CD14-positive monocyte (primary cell): ENCODE measurements at regions of chr19 and their contacts with region 1.

Region 1: GRCh38 chr19:49097455-49098288 is 12.4 kb downstream of the SNRNP70 start:
- DNase-seq: peak; percentile 55 to 67 (median 64)
- H3K4me3 ChIP-seq: no peak overlapping the region
- H3K4me3 Mint-ChIP-seq: no peak overlapping the region
- H3K27ac ChIP-seq: peak overlapping the region in 1 of 2 donors; percentile 38
- H3K27ac Mint-ChIP-seq: peak overlapping the region in 1 of 7 donors; percentile 42
- H3K4me1 ChIP-seq: no peaks in the 10 kb centered on the region
- H3K4me1 Mint-ChIP-seq: no peaks in the 10 kb centered on the region
- H3K27me3 ChIP-seq: no peaks in the 10 kb centered on the region
- H3K27me3 Mint-ChIP-seq: peaks cover 0 to 1% (median 0%) of the 10 kb centered on the region in 3 donors
- CTCF ChIP-seq: peak; percentile 99

Region 2: DNA sequence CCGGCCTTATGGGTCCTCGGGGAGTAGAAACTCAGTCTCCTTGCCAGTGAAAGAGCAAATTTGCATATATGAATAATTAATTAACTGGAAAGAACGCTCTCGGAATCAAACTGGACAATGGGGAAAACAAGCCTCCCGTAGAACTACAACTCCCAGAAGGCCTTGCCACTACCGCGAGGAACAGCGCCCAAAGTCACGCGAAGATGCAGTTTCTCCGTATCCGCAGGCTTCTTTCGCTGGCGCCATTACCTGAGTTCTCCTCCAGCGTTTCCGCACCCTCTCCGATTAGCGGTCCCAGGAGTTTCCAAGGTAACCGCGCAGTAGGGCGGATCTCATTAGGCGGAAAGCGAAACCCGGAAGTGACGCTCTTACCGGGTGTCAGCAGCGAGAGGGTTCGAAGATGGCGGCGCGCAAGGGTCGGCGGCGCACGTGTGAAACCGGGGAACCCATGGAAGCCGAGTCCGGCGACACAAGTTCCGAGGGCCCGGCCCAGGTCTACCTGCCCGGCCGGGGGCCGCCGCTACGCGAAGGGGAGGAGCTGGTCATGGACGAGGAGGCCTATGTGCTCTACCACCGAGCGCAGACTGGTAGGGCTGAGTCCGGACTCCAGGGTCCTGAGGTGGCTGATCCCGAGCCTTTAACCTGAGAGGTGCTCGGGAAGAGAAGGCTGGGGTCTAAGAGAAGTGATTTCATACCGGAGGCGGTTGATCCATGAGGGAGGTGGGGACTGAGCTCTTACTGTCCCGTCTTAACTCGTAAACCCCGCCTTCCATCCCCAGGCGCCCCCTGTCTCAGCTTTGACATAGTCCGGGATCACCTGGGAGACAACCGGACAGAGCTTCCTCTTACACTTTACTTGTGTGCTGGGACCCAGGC is 651.8 kb before region 1 on chr19 and contains the start of gene GRWD1:
- intact Hi-C with region 1: no loop called
- DNase-seq: peak; percentile 92 to 96 (median 94)
- H3K4me3 ChIP-seq: peak within 1 kb of the TSS; percentile 77 to 99 (median 95)
- H3K4me3 Mint-ChIP-seq: peak within 1 kb of the TSS; percentile 86 to 92
- H3K27ac ChIP-seq: peak within 1 kb of the TSS; percentile 82 to 91
- H3K27ac Mint-ChIP-seq: peak within 1 kb of the TSS; percentile 95 to 99 (median 98)
- H3K4me1 ChIP-seq: peaks cover 25 to 32% of the 10 kb centered on the region in 2 donors
- H3K4me1 Mint-ChIP-seq: peaks cover 23% of the 10 kb centered on the region
- H3K27me3 ChIP-seq: peaks cover 28 to 31% of the 10 kb centered on the region in 2 donors
- H3K27me3 Mint-ChIP-seq: peaks cover 25 to 36% (median 30%) of the 10 kb centered on the region in 3 donors
- CTCF ChIP-seq: peak; percentile 12
- polyA plus RNA-seq, gene GRWD1: 3.7 to 13.9 (median 10.0) TPM

Region 3: GRCh38 chr19:49085020-49085867 is 12.4 kb before region 1 on chr19 and contains the start of gene SNRNP70:
- intact Hi-C with region 1: no loop called
- DNase-seq: peak; percentile 98 to 99 (median 99)
- H3K4me3 ChIP-seq: peak within 1 kb of the TSS; percentile 62 to 93 (median 71)
- H3K4me3 Mint-ChIP-seq: peak within 1 kb of the TSS; percentile 91 to 94
- H3K27ac ChIP-seq: peak within 1 kb of the TSS; percentile 61 to 84
- H3K27ac Mint-ChIP-seq: peak within 1 kb of the TSS; percentile 86 to 95 (median 89)
- H3K4me1 ChIP-seq: peaks cover 18 to 22% of the 10 kb centered on the region in 2 donors
- H3K4me1 Mint-ChIP-seq: peaks cover 21% of the 10 kb centered on the region
- H3K27me3 ChIP-seq: no peaks in the 10 kb centered on the region
- H3K27me3 Mint-ChIP-seq: peaks cover 2 to 4% (median 2%) of the 10 kb centered on the region in 3 donors
- CTCF ChIP-seq: no peak
- polyA plus RNA-seq, gene SNRNP70: 27.4 to 360 (median 40.4) TPM

Region 4: GRCh38 chr19:49148784-49149651 is 51.3 kb after region 1 on chr19:
- intact Hi-C with region 1: loop called (anchors 2 to 5 kb)
- DNase-seq: peak; percentile 49 to 64 (median 54)
- H3K4me3 ChIP-seq: peak overlapping the region in 2 of 3 experiments; percentile 59 to 79
- H3K4me3 Mint-ChIP-seq: peak overlapping the region; percentile 79 to 93
- H3K27ac ChIP-seq: no peak overlapping the region
- H3K27ac Mint-ChIP-seq: peak overlapping the region in 1 of 7 donors; percentile 63
- H3K4me1 ChIP-seq: peaks cover 39 to 53% of the 10 kb centered on the region in 2 donors
- H3K4me1 Mint-ChIP-seq: peaks cover 45% of the 10 kb centered on the region
- H3K27me3 ChIP-seq: peaks cover 13 to 54% of the 10 kb centered on the region in 2 donors
- H3K27me3 Mint-ChIP-seq: peaks cover 67 to 77% (median 70%) of the 10 kb centered on the region in 3 donors
- CTCF ChIP-seq: no peak

Region 5: DNA sequence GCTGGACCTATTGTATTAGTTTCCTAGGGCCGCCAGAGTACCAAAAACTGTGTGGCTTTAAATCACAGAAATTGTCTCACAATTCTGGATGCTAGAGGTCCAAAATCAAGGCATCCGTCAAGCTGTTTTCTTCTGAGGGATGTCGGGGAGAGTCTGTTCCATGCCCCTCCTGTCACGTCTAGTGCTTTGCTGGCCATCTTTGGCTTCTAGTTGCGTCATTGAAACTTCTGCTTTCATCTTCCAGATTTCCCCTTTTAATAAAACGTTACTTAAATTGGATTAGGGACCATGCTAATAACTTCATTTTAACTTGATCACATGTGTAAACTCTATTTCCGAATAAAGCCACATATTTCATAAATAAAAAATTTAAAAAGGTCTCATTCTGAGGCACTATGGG is 107.4 kb after region 1 on chr19:
- intact Hi-C with region 1: loop called in 1 of 2 experiments (anchors 5 kb)
- DNase-seq: peak; percentile 68 to 82 (median 76)
- H3K4me3 ChIP-seq: no peak overlapping the region
- H3K4me3 Mint-ChIP-seq: peak overlapping the region in 1 of 2 donors; percentile 35
- H3K27ac ChIP-seq: no peak overlapping the region
- H3K27ac Mint-ChIP-seq: peak overlapping the region in 6 of 7 donors; percentile 43 to 89 (median 76)
- H3K4me1 ChIP-seq: peaks cover 32 to 55% of the 10 kb centered on the region in 2 donors
- H3K4me1 Mint-ChIP-seq: peaks cover 42% of the 10 kb centered on the region
- H3K27me3 ChIP-seq: no peaks in the 10 kb centered on the region
- H3K27me3 Mint-ChIP-seq: peaks cover 0 to 6% (median 4%) of the 10 kb centered on the region in 3 donors
- CTCF ChIP-seq: no peak

Region 6: GRCh38 chr19:49216071-49216470 is 118.4 kb after region 1 on chr19:
- intact Hi-C with region 1: loop called in 1 of 2 experiments (anchors 5 kb)
- DNase-seq: no peak
- H3K4me3 ChIP-seq: no peak overlapping the region
- H3K4me3 Mint-ChIP-seq: no peak overlapping the region
- H3K27ac ChIP-seq: no peak overlapping the region
- H3K27ac Mint-ChIP-seq: no peak overlapping the region
- H3K4me1 ChIP-seq: peaks cover 0 to 10% of the 10 kb centered on the region in 2 donors
- H3K4me1 Mint-ChIP-seq: peaks cover 6% of the 10 kb centered on the region
- H3K27me3 ChIP-seq: no peaks in the 10 kb centered on the region
- H3K27me3 Mint-ChIP-seq: peaks cover 2 to 12% (median 6%) of the 10 kb centered on the region in 3 donors
- CTCF ChIP-seq: no peak

Region 7: DNA sequence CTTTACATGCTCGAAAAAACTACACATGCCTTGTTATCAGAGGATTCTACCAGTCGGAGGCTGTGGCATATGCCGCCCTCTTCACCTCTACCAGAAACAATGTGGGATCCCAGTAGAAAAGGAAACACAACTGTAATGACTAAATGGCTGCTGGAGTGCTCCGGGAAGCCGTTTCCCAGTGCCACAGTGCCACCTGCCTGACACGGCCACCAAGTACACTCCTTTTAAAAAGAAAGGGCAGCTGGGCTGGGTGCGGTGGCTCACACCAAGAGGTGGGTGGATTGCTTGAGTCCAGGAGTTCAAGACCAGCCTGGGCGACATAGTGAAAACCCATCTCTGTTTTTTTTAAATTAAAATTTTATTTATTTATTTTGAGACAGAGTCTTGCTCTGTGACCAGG is 127.2 kb after region 1 on chr19:
- intact Hi-C with region 1: loop called in 1 of 2 experiments (anchors 5 kb)
- DNase-seq: peak; percentile 21 to 30 (median 27)
- H3K4me3 ChIP-seq: no peak overlapping the region
- H3K4me3 Mint-ChIP-seq: no peak overlapping the region
- H3K27ac ChIP-seq: no peak overlapping the region
- H3K27ac Mint-ChIP-seq: no peak overlapping the region
- H3K4me1 ChIP-seq: no peaks in the 10 kb centered on the region
- H3K4me1 Mint-ChIP-seq: no peaks in the 10 kb centered on the region
- H3K27me3 ChIP-seq: no peaks in the 10 kb centered on the region
- H3K27me3 Mint-ChIP-seq: peaks cover 4 to 11% (median 8%) of the 10 kb centered on the region in 3 donors
- CTCF ChIP-seq: peak; percentile 30

Region 8: DNA sequence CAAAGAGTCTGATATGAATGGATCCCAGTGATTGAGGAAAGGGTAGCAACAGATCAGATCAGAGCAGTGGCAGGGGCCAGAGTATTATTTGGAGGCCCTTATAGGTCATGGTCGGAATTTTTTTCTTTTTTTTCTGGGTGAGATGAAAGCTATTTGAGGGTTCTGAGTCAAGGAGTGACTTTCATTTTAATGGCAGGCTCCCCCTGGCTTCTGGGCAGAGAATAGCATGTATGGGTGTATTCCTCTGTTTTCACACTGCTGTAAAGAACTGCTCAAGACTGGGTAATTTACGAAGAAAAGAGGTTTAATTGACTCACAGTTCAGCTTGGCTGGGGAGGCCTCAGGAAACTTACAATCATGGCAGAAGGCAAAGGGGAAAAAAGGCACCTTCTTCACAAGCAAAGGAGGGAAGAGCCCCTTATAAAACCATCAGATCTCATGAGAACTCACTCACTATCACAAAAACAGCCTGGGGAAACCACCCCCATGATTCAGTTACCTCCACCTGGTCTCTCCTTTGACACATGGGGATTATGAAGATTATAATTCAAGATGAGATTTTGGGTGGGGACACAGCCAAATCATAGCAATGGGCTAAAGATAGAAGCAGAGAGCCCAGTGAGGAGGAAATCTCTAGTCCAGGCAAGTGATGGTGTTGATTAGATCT is 230.3 kb after region 1 on chr19:
- intact Hi-C with region 1: loop called in 1 of 2 experiments (anchors 10 kb)
- DNase-seq: peak in 2 of 3 donors; percentile 37 to 43
- H3K4me3 ChIP-seq: no peak overlapping the region
- H3K4me3 Mint-ChIP-seq: no peak overlapping the region
- H3K27ac ChIP-seq: no peak overlapping the region
- H3K27ac Mint-ChIP-seq: peak overlapping the region in 1 of 7 donors; percentile 61
- H3K4me1 ChIP-seq: peaks cover 22 to 31% of the 10 kb centered on the region in 2 donors
- H3K4me1 Mint-ChIP-seq: peaks cover 30% of the 10 kb centered on the region
- H3K27me3 ChIP-seq: no peaks in the 10 kb centered on the region
- H3K27me3 Mint-ChIP-seq: no peaks in the 10 kb centered on the region
- CTCF ChIP-seq: peak; percentile 89